Endothelial cell of umbilical vein (primary cell): ENCODE measurements at regions of chr5 and their contacts with region 1.

Region 1: GRCh38 chr5:93800988-93801811 is 59.8 kb upstream of the POU5F2 start:
- DNase-seq: peak; percentile 68
- H3K4me3 ChIP-seq: no peak overlapping the region
- H3K27ac ChIP-seq: no peak overlapping the region
- H3K4me1 ChIP-seq: peaks cover 2% of the 10 kb centered on the region
- H3K27me3 ChIP-seq: no peaks in the 10 kb centered on the region
- CTCF ChIP-seq: peak; percentile 41
- POLR2A ChIP-seq: no peak

Region 2: DNA sequence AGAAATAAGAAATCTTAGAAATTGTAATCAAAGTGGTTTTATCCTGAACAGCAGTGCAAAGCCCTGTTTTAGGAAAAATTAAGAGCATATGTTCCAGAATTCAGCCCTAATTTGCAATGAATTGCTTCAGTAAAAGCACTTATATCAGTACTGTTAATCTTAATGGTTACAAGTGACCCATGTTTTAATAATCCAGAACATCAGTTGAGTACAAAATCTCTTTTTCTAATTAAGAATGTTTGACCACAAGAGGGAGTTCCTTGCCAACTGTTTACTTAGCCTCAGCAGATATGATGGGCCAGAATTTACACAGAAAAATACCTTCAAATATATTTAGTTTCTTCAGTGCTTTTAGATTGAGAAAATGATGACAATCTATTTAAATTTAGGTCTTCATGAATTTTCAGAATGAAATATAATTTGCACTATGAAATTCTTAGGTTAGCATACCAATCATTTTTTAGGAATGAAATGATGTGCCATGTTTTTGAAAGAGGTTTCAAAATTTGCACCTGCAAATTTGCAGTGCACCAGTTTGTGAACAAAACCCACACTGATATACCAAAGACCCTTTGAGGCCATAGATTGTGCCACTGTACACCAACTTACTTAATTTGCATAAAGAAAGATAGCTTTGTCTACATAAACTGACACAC is 1491.7 kb before region 1 on chr5:
- CTCF ChIA-PET with region 1: interaction called, 18 read pairs
- POLR2A ChIA-PET with region 1: no interaction called
- dilution Hi-C with region 1: no loop called
- intact Hi-C with region 1: loop called (anchors 2 kb)
- DNase-seq: peak; percentile 31
- H3K4me3 ChIP-seq: no peak overlapping the region
- H3K27ac ChIP-seq: no peak overlapping the region
- H3K4me1 ChIP-seq: no peaks in the 10 kb centered on the region
- H3K27me3 ChIP-seq: no peaks in the 10 kb centered on the region
- CTCF ChIP-seq: peak in 1 of 2 donors; percentile 24
- POLR2A ChIP-seq: no peak

Region 3: GRCh38 chr5:92916036-92916435 is 885.2 kb before region 1 on chr5:
- CTCF ChIA-PET with region 1: interaction called, 59 read pairs
- POLR2A ChIA-PET with region 1: no interaction called
- dilution Hi-C with region 1: no loop called
- intact Hi-C with region 1: no loop called
- DNase-seq: peak; percentile 61
- H3K4me3 ChIP-seq: no peak overlapping the region
- H3K27ac ChIP-seq: no peak overlapping the region
- H3K4me1 ChIP-seq: no peaks in the 10 kb centered on the region
- H3K27me3 ChIP-seq: no peaks in the 10 kb centered on the region
- CTCF ChIP-seq: no peak
- POLR2A ChIP-seq: no peak

Region 4: GRCh38 chr5:93433392-93433791 is 367.8 kb before region 1 on chr5:
- CTCF ChIA-PET with region 1: no interaction called
- POLR2A ChIA-PET with region 1: no interaction called
- dilution Hi-C with region 1: no loop called
- intact Hi-C with region 1: loop called (anchors 10 kb)
- DNase-seq: no peak
- H3K4me3 ChIP-seq: no peak overlapping the region
- H3K27ac ChIP-seq: no peak overlapping the region
- H3K4me1 ChIP-seq: no peaks in the 10 kb centered on the region
- H3K27me3 ChIP-seq: no peaks in the 10 kb centered on the region
- CTCF ChIP-seq: no peak
- POLR2A ChIP-seq: no peak

Region 5: DNA sequence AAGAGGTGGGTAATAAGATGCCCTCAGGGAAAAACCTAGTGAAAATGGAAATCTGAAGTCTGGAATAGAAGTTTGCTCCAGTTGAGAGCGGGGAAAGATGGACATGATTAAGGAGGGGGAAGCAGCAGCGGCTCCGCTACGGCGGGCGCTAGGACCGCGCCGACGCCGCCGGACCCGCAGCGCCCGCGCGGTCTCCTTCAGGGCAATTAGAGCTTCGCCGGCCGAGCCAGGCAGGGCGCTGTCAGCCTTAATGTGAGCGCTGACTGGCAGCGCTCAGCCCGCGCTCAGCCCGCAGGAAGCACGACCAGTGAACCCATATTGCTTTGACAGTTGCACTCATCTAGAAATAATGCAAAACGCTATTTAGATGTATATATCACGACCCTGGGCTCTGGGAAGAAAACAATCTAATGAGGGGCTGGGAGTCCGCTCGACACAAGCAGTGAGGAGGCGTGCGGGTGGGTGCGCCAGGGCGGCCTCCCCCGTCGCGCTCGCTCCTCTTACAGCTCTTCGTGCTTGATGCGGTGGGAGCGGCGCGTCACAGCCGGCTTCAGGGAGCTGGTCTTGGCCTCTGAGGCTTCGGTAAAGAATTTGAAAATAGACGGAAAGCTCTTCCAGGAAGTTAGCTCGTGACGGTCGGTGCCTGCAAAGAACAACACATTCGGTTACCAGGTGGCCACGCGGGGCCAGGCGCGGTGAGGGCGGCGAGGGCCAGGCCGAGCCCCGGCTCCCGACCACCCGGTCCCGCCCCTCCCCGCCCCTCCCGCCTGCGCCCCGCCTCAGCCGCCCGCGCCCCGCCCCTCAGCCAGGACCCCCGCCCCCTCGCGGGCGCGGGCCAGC is 180.5 kb before region 1 on chr5:
- CTCF ChIA-PET with region 1: interaction called, 43 read pairs
- POLR2A ChIA-PET with region 1: no interaction called
- dilution Hi-C with region 1: no loop called
- intact Hi-C with region 1: loop called (anchors 2 kb)
- DNase-seq: peak; percentile 69
- H3K4me3 ChIP-seq: peak overlapping the region; percentile 51 to 67 (median 64)
- H3K27ac ChIP-seq: peak overlapping the region; percentile 39
- H3K4me1 ChIP-seq: peaks cover 7% of the 10 kb centered on the region
- H3K27me3 ChIP-seq: peaks cover 0 to 2% of the 10 kb centered on the region in 2 experiments
- CTCF ChIP-seq: peak in 1 of 2 donors; percentile 28
- POLR2A ChIP-seq: no peak

Region 6: GRCh38 chr5:93915142-93915553 is 113.9 kb after region 1 on chr5:
- CTCF ChIA-PET with region 1: interaction called, 7 read pairs
- POLR2A ChIA-PET with region 1: no interaction called
- dilution Hi-C with region 1: no loop called
- intact Hi-C with region 1: loop called (anchors 1 kb)
- DNase-seq: peak; percentile 50
- H3K4me3 ChIP-seq: no peak overlapping the region
- H3K27ac ChIP-seq: no peak overlapping the region
- H3K4me1 ChIP-seq: no peaks in the 10 kb centered on the region
- H3K27me3 ChIP-seq: no peaks in the 10 kb centered on the region
- CTCF ChIP-seq: peak; percentile 24
- POLR2A ChIP-seq: no peak